Calu3 (cell line): ENCODE measurements at regions of chr1 and their contacts with region 1.

Region 1: DNA sequence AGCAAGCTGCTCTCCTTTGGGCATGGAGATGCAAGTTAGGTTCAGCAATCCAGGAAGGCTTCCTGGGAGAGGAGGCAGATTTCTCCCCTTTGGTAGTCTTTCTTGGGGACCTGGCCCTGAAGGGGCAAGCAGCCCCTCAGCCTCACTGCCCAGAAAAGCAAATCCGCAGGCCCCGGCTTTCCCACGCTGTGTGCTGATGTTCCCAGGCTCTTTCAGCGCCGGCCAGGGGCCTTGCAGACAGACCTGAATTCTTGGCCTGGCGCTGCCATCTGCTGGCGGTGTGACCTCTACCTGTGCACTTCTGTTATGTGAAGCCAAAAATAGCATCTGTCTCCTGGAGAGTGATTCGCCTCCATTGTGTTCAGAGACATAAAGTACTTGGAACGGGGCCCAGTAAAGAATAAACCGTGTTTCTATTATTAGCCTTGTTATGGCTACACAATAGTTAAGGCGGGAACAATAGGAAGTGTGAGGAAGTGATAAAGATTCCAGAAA is 64.8 kb downstream of the ALPL start:
- DNase-seq: peak; percentile 66
- H3K4me3 Mint-ChIP-seq: no peak overlapping the region
- H3K27ac Mint-ChIP-seq: no peak overlapping the region
- H3K4me1 Mint-ChIP-seq: no peaks in the 10 kb centered on the region
- H3K27me3 Mint-ChIP-seq: no peaks in the 10 kb centered on the region
- CTCF ChIP-seq: peak; percentile 31

Region 2: GRCh38 chr1:21508580-21509350 is 65.3 kb before region 1 on chr1:
- CTCF ChIA-PET with region 1: no interaction called
- intact Hi-C with region 1: loop called (anchors 2 kb)
- DNase-seq: peak; percentile 79
- H3K4me3 Mint-ChIP-seq: peak overlapping the region; percentile 64
- H3K27ac Mint-ChIP-seq: peak overlapping the region; percentile 10
- H3K4me1 Mint-ChIP-seq: peaks cover 9% of the 10 kb centered on the region
- H3K27me3 Mint-ChIP-seq: peaks cover 57% of the 10 kb centered on the region
- CTCF ChIP-seq: peak; percentile 65

Region 3: DNA sequence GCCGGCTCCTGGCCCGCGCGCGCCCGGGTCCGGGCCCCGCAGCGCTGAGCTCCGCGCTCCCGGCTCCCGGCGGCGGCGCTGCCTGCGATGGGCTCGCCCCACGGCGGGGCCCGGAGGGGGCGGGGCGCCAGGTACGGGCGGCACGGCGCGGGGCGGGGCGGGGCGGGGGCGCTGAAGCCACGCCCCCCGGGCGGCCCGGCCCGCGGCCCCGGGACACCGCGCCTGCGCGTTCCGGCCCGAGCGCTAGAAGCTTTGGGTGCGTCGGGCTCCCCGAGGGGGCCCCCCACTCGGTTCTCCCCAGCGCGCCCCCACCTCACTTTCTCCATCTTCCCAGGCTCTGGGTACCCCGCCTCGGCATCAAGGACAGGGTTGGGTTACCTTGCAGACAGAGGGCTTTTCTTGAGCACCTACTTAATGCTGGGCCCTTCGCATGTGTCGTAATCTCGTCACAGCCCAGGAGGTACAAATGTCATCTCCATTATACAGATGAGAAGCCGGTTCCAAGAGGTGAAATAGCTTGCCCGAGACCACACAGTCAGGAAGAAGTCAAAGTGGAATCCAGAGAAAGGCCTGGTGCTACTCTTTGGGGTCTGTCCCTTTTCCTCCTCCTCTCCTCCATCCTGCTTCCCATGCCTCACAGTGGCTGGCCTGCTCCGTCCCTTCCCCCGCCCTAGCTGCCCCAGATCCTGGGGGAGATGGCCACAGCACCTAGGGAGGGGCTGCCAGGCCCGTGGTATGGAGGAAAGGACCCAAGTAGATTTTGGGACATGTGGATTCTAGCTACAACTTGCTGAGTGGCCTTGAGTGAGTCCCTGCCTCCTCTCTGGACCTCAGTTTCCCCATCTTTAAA is 48.7 kb after region 1 on chr1:
- CTCF ChIA-PET with region 1: no interaction called
- intact Hi-C with region 1: no loop called
- DNase-seq: peak; percentile 75
- H3K4me3 Mint-ChIP-seq: peak overlapping the region; percentile 48
- H3K27ac Mint-ChIP-seq: peak overlapping the region; percentile 79
- H3K4me1 Mint-ChIP-seq: peaks cover 28% of the 10 kb centered on the region
- H3K27me3 Mint-ChIP-seq: no peaks in the 10 kb centered on the region
- CTCF ChIP-seq: no peak

Region 4: DNA sequence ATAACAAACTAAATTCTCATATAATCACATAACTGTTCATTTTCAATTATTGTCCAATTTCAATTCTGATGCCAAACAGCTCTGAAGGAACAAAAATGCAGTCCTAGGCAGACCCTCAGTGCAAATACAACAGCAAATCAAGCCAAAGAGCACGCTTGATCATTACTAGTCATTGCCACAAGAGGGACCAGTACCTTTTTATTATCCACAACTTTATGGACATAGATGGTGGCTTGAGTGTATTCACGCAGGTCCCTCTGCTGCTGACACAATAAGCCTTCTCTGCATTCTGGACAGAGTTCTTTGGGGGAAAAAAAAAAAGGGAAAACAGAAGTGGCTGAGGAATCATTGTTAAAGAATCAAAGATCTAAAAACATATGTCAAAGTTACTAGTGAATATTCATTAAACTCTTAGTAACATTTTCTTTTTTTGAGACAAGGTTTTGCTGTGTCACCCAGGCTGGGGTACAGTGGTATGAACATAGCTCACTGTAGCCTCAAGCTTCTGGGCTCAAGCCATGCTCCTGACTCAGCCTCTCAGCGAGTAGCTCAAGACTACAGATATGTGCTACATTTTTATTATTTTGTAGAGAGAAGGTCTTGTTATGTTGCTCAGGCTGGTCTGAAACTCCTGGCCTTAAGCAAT is 129.4 kb after region 1 on chr1:
- CTCF ChIA-PET with region 1: no interaction called
- intact Hi-C with region 1: no loop called
- DNase-seq: no peak
- H3K4me3 Mint-ChIP-seq: no peak overlapping the region
- H3K27ac Mint-ChIP-seq: no peak overlapping the region
- H3K4me1 Mint-ChIP-seq: no peaks in the 10 kb centered on the region
- H3K27me3 Mint-ChIP-seq: no peaks in the 10 kb centered on the region
- CTCF ChIP-seq: no peak